ENCODE measurements at regions of chr2 and their contacts with region 1.

Region 1: DNA sequence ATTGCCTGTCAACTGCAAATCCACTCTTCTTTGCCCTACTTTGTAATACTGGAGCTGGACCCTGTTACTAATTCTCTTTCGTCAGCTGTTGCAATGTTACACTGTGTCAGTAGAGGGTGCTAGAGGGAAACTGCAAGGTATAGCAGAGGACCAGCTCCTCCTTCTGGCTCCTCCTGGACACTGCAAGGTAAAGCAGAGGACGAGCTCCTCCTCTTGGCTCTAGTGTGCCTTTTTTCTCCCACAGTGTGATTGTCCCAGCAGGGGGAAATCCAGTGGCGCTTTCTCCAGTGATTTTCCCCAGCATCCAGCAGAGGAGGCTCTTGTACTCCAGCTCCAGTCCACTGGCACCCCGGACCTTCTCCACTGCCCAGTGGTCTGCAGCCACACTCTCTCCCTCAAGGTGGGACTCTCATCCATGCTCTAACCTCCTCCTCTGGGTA is 95.6 kb downstream of the CAPN13 start:
- H3K4me3 ChIP-seq: no peak overlapping the region
- H3K27ac ChIP-seq: no peak overlapping the region
- H3K4me1 ChIP-seq: no peaks in the 10 kb centered on the region
- CTCF ChIP-seq: peak; percentile 89

Region 2: GRCh38 chr2:30155889-30156658 is 555.6 kb before region 1 on chr2:
- CTCF ChIA-PET with region 1: interaction called, 13 read pairs
- POLR2A ChIA-PET with region 1: no interaction called
- H3K4me3 ChIP-seq: no peak overlapping the region
- H3K27ac ChIP-seq: no peak overlapping the region
- H3K4me1 ChIP-seq: peaks cover 1% of the 10 kb centered on the region
- CTCF ChIP-seq: no peak

Region 3: GRCh38 chr2:30201990-30202389 is 509.7 kb before region 1 on chr2:
- CTCF ChIA-PET with region 1: interaction called, 272 read pairs
- POLR2A ChIA-PET with region 1: no interaction called
- H3K4me3 ChIP-seq: no peak overlapping the region
- H3K27ac ChIP-seq: no peak overlapping the region
- H3K4me1 ChIP-seq: no peaks in the 10 kb centered on the region
- CTCF ChIP-seq: no peak

Region 4: DNA sequence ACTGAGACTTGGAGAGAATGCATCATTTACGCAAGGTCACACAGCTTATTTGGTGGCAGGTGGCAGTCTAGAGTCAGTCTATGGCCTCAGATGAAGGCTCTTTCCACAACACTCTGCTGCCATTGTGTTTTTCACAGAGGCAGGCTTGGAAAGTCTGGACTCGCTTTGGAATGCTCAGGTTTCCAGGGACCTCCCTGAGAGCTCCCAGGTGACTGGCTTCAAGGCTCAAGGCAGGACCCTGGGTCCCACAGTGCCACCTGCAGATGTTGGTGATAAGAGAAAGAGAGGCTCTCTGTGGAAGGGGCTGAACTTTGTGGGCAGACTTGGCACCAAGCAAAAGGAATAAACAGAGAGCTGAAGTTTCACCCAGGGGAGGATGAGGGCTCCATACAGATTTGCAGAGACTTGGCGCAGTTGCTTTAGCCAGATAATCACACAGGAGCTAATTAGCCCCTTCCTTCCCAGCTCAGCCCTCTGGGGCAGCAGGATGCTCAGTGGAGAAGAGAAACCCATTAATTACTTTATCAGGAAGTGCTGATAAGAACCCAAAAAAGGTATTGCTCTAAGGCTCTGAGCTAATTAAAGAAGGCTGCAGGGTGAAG is 376.8 kb before region 1 on chr2:
- CTCF ChIA-PET with region 1: interaction called, 16 read pairs
- POLR2A ChIA-PET with region 1: no interaction called
- H3K4me3 ChIP-seq: no peak overlapping the region
- H3K27ac ChIP-seq: no peak overlapping the region
- H3K4me1 ChIP-seq: no peaks in the 10 kb centered on the region
- CTCF ChIP-seq: no peak

Region 5: GRCh38 chr2:30721668-30722647 is 10.3 kb after region 1 on chr2:
- CTCF ChIA-PET with region 1: interaction called, 28 read pairs
- POLR2A ChIA-PET with region 1: no interaction called
- H3K4me3 ChIP-seq: no peak overlapping the region
- H3K27ac ChIP-seq: no peak overlapping the region
- H3K4me1 ChIP-seq: no peaks in the 10 kb centered on the region
- CTCF ChIP-seq: no peak

Region 6: DNA sequence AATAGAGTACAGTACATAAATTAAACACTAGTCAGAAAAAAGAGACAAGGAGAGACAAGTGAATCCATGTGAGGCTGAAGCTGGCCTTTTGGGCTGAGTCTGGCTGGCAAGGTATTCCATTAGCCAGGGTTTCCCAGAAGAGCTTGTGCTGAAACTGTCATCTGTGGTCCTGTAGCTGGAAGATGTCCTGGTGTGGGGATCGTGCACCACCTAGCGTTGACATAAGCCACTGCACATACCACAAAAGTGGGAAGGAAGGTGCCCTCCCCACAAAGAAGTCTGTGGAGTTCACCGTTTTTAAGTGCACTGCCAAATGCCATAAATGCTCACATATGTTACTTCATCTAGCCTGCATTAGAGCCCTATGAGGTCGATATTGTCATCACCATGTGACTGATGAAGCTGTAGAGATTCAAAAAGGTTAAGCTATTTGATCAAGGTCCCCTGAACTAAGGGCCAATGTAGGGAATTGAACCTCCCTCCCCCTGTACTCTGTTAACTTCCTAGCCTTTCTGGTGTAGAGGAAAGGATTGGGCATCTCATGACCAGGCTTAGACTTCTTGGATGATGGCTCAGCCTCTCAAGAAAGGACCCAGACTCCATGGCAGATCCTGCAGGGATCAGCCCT is 458.5 kb after region 1 on chr2:
- CTCF ChIA-PET with region 1: interaction called, 127 read pairs
- POLR2A ChIA-PET with region 1: no interaction called
- H3K4me3 ChIP-seq: no peak overlapping the region
- H3K27ac ChIP-seq: no peak overlapping the region
- H3K4me1 ChIP-seq: no peaks in the 10 kb centered on the region
- CTCF ChIP-seq: peak; percentile 69

Measured in HEK293 (cell line).